ENCODE measurements at regions of chr3 and their contacts with region 1.

Region 1: GRCh38 chr3:11719406-11720230 is 75.9 kb upstream of the VGLL4 start:
- DNase-seq: peak; percentile 86
- ATAC-seq: peak; percentile 64
- H3K4me3 Mint-ChIP-seq: peak overlapping the region; percentile 91
- H3K27ac Mint-ChIP-seq: no peak overlapping the region
- H3K4me1 Mint-ChIP-seq: peaks cover 23% of the 10 kb centered on the region
- H3K27me3 Mint-ChIP-seq: peaks cover 11% of the 10 kb centered on the region

Region 2: GRCh38 chr3:11379233-11379823 is 340.3 kb before region 1 on chr3:
- CTCF ChIA-PET with region 1: interaction called, 3 read pairs
- POLR2A ChIA-PET with region 1: no interaction called
- intact Hi-C with region 1: loop called in 1 of 2 experiments (anchors 1 kb)
- DNase-seq: no peak
- ATAC-seq: no peak
- H3K4me3 Mint-ChIP-seq: no peak overlapping the region
- H3K27ac Mint-ChIP-seq: no peak overlapping the region
- H3K4me1 Mint-ChIP-seq: no peaks in the 10 kb centered on the region
- H3K27me3 Mint-ChIP-seq: no peaks in the 10 kb centered on the region

Region 3: GRCh38 chr3:11764931-11765363 is 45.3 kb after region 1 on chr3:
- CTCF ChIA-PET with region 1: no interaction called
- POLR2A ChIA-PET with region 1: no interaction called
- intact Hi-C with region 1: loop called (anchors 1 to 5 kb)
- DNase-seq: peak; percentile 74
- ATAC-seq: peak; percentile 85
- H3K4me3 Mint-ChIP-seq: no peak overlapping the region
- H3K27ac Mint-ChIP-seq: peak overlapping the region; percentile 22
- H3K4me1 Mint-ChIP-seq: peaks cover 13% of the 10 kb centered on the region
- H3K27me3 Mint-ChIP-seq: no peaks in the 10 kb centered on the region

Region 4: DNA sequence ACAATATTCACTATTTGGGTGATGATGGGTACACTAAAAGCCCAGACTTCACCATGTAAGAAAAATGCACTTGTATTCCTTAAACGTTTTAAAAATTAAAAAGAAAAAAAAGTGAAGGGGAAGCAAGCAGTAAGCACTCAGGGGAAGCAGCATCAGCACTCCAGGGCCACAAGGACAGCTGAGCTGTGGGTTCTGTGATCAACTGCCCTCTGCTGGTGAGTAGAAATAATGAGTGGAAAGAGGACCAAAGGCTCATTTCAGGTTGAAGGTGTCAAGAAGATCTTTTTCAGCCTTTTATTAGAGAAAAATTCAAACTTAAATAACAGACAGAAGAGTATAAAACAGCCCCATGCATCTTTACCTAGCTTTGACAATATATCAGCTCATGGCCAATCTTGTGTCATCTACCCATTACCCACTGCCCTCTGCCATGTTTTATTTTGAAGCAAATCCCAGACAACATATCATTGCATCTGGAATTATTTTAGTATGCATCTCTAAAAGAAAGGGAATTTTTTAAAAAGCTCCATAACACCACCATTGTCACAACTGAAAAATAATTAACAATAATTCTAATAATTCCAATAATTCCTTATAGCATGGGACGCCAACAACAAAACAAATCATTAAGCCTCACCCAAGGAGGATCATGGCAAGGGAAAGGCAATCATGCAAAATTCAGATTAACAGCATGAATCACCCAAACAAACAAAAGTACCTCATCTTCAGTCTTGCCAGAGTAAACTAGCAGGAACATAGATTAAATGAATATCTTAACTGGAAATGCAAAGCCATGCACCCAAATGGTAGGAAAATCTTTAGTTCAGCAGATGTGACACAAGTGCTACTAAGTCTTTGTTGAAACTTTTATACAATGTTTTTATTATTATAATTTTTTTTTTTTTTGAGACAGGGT is 84.6 kb after region 1 on chr3:
- CTCF ChIA-PET with region 1: no interaction called
- POLR2A ChIA-PET with region 1: no interaction called
- intact Hi-C with region 1: loop called in 1 of 2 experiments (anchors 2 kb)
- DNase-seq: peak; percentile 56
- ATAC-seq: peak; percentile 80
- H3K4me3 Mint-ChIP-seq: no peak overlapping the region
- H3K27ac Mint-ChIP-seq: no peak overlapping the region
- H3K4me1 Mint-ChIP-seq: peaks cover 5% of the 10 kb centered on the region
- H3K27me3 Mint-ChIP-seq: no peaks in the 10 kb centered on the region

Measured in activated CD4-positive, alpha-beta T cell treated with anti-CD3 and anti-CD28 coated beads for 36 hours (primary cell).